ENCODE measurements at regions of chr10 and their contacts with region 1.

Region 1: GRCh38 chr10:451021-451471 is 238.4 kb downstream of the DIP2C start:
- DNase-seq: no peak
- H3K4me3 ChIP-seq: no peak overlapping the region
- H3K27ac ChIP-seq: peak overlapping the region in 2 of 4 donors; percentile 34 to 85
- H3K4me1 ChIP-seq: peaks cover 23 to 48% (median 43%) of the 10 kb centered on the region in 4 donors
- H3K27me3 ChIP-seq: no peaks in the 10 kb centered on the region
- CTCF ChIP-seq: no peak
- EP300 ChIP-seq: no peak
- POLR2A ChIP-seq: no peak

Region 2: GRCh38 chr10:490891-491581 is 40.0 kb after region 1 on chr10:
- intact Hi-C with region 1: loop called (anchors 5 kb)
- DNase-seq: no peak
- H3K4me3 ChIP-seq: peak overlapping the region; percentile 5 to 40 (median 22)
- H3K27ac ChIP-seq: peak overlapping the region; percentile 86 to 93 (median 90)
- H3K4me1 ChIP-seq: peaks cover 55 to 83% (median 76%) of the 10 kb centered on the region in 4 donors
- H3K27me3 ChIP-seq: no peaks in the 10 kb centered on the region
- CTCF ChIP-seq: no peak
- EP300 ChIP-seq: no peak
- POLR2A ChIP-seq: no peak

Region 3: DNA sequence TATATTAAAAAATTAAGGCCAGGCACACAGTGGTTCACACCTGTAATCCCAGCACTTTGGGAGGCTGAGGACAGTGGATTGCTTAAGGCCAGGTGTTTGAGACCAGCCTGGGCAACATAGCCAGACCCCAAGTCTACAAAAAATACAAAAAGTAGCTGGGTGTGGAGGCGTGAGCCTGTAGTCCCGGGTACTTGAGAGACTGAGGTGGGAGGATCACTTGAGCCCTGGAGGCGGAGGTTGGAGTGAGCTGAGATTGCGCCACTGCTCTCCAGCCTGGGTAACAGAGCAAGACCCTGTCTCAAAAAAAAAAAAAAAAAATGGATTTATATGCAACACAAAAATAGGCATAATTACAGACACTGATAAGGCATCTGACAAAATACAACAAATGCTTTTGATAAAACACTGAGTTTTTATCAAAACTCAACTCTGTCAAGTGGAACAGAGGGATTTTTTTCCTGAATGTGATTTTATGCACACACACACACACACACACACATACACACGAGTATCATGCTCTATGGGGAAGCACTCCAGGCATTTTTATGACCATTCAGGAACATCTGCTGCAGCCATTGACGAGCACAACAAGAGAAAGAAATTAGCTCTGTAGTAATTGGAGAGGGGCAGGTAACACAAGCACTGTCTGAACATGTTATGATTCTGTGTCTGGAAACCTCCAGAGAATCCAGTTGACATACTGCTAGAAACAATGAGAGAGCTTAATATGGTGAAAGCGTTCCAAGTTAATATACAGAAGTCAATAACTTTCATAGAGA is 798.3 kb after region 1 on chr10:
- intact Hi-C with region 1: no loop called
- DNase-seq: no peak
- H3K4me3 ChIP-seq: no peak overlapping the region
- H3K27ac ChIP-seq: no peak overlapping the region
- H3K4me1 ChIP-seq: no peaks in the 10 kb centered on the region
- H3K27me3 ChIP-seq: peaks cover 0 to 33% (median 0%) of the 10 kb centered on the region in 4 donors
- CTCF ChIP-seq: no peak
- EP300 ChIP-seq: no peak
- POLR2A ChIP-seq: no peak